Ascending aorta (tissue), 2 donors: ENCODE measurements at regions of chr7 and their contacts with region 1.

Region 1: GRCh38 chr7:66114793-66115649 is at the start of gene CRCP:
- DNase-seq: peak; percentile 25 to 88
- H3K4me3 ChIP-seq: peak within 1 kb of the TSS; percentile 88 to 90
- H3K27ac ChIP-seq: peak within 1 kb of the TSS; percentile 95 to 98
- H3K4me1 ChIP-seq: peaks cover 0 to 19% of the 10 kb centered on the region in 2 donors
- H3K27me3 ChIP-seq: no peaks in the 10 kb centered on the region
- CTCF ChIP-seq: peak in 2 of 3 experiments; percentile 7 to 30
- total RNA-seq, gene CRCP: 129 TPM

Region 2: DNA sequence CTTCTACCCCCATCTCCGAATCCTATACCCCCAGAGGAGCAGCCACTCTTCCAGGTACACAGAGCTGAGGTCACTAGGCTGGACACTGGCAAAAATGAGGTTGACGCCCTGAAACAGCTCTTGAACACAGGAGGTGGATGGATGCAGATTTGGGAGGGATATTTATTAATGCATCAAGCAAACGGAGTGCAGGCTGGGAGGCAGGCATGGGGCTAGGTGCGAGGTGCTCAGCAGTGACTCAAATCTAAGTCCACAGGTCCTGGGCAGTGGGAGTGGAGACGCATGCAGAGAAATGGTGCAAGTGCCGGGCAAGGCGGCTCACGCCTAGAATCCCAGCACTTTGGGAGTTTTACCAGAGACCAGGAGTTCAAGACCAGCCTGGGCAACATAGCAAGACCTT is 144.0 kb before region 1 on chr7:
- intact Hi-C with region 1: no loop called
- DNase-seq: peak in 1 of 2 donors; percentile 28
- H3K4me3 ChIP-seq: no peak overlapping the region
- H3K27ac ChIP-seq: no peak overlapping the region
- H3K4me1 ChIP-seq: no peaks in the 10 kb centered on the region
- H3K27me3 ChIP-seq: no peaks in the 10 kb centered on the region
- CTCF ChIP-seq: no peak

Region 3: GRCh38 chr7:65981965-65982792 is 132.8 kb before region 1 on chr7 and contains the start of gene GUSB:
- intact Hi-C with region 1: loop called (anchors 10 kb)
- DNase-seq: peak; percentile 56 to 94
- H3K4me3 ChIP-seq: peak within 1 kb of the TSS; percentile 79 to 91
- H3K27ac ChIP-seq: peak within 1 kb of the TSS; percentile 76 to 80
- H3K4me1 ChIP-seq: peaks cover 6 to 12% of the 10 kb centered on the region in 2 donors
- H3K27me3 ChIP-seq: no peaks in the 10 kb centered on the region
- CTCF ChIP-seq: no peak
- total RNA-seq, gene GUSB: 8.7 TPM

Region 4: DNA sequence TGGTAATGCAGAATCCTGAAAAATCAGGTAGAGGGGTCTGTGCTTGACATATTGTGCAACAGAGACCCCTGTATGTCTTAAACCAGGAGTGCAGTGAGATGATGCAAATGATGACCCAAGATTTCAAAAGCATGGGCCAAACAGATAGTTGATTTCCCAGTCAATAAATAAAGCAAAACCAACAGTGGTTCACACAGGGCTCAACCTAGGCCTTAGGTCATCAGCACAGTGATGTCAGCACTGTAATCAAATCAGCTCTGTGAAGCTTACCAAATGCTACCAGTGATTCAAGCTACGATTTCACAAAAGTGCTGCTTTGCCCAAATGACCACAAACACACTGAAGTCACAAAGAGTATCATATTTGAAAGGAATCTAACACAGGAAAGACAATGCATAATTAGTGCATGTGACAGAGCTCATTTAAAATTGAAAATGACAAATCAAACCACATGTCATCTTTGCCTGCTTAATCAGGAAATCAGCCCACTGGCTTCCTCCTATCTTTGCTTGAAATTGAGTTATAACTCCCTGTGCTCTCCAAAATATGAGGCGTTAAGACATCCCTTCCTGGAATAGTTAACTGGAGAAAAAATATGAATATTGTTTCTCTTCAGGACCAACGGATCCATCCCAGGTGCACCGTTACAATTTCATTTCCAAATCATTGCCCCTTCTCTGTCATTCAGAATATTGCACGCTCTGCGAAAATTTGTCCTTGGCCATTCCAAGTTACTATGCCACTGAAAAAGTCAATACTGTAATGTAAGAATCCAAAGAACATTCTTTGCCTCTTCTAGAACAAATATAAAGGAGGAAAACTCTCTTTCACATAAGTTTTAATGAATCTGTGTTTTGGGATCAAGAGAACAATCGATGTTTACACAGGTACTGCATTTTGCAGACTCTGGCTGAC is 81.3 kb before region 1 on chr7:
- intact Hi-C with region 1: loop called (anchors 5 kb)
- DNase-seq: no peak
- H3K4me3 ChIP-seq: no peak overlapping the region
- H3K27ac ChIP-seq: no peak overlapping the region
- H3K4me1 ChIP-seq: no peaks in the 10 kb centered on the region
- H3K27me3 ChIP-seq: no peaks in the 10 kb centered on the region
- CTCF ChIP-seq: no peak

Region 5: GRCh38 chr7:66075590-66076461 is 39.2 kb before region 1 on chr7 and contains the start of gene ASL:
- intact Hi-C with region 1: loop called (anchors 1 kb)
- DNase-seq: peak; percentile 73 to 96
- H3K4me3 ChIP-seq: peak within 1 kb of the TSS; percentile 92 to 94
- H3K27ac ChIP-seq: peak within 1 kb of the TSS; percentile 72 to 75
- H3K4me1 ChIP-seq: peaks cover 8 to 18% of the 10 kb centered on the region in 2 donors
- H3K27me3 ChIP-seq: no peaks in the 10 kb centered on the region
- CTCF ChIP-seq: no peak
- total RNA-seq, gene ASL: 46.2 TPM

Region 6: DNA sequence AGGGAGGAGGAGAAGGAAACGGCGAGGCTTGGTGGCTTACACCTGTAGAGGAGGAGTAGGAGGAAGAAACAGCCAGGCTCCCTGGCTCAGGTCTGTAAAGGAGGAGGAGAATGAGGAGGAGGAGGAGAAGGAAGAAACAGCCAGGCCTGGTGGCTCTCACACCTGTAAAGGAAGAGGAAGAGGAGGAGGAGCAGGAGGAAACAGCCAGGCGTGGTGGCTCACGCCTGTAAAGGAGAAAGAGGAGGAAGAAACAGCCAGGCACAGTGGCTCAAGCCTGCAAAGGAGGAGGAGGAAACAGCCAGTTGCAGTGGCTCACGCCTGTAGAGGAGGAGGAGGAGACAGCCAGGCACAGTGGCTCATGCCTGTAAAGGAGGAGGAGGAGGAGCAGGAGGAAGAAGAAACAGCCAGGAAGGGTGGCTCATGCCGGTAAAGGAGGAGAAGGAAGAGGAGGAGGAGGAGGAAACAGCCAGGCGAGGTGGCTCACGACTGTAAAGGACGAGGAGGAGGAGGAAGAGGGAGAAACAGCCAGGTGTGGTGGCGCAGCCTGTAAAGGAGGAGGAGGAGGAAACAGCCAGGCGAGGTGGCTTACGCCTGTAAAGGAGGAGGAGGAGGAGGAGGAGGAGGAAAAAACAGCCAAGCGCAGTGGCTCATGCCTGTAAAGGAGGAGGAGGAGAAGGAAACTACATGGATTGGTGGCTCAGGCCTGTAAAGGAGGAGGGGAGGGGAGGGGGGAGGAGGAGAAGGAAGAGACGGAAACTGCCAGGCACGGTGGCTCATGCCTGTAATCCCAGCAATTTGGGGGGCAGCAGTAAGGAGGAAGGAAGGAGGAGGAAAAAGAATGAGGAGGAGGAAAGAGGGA is 15.2 kb before region 1 on chr7:
- intact Hi-C with region 1: loop called (anchors 1 kb)
- DNase-seq: peak; percentile 25 to 88
- H3K4me3 ChIP-seq: peak overlapping the region; percentile 47 to 60
- H3K27ac ChIP-seq: peak overlapping the region; percentile 84 to 93
- H3K4me1 ChIP-seq: no peaks in the 10 kb centered on the region
- H3K27me3 ChIP-seq: no peaks in the 10 kb centered on the region
- CTCF ChIP-seq: no peak

Region 7: DNA sequence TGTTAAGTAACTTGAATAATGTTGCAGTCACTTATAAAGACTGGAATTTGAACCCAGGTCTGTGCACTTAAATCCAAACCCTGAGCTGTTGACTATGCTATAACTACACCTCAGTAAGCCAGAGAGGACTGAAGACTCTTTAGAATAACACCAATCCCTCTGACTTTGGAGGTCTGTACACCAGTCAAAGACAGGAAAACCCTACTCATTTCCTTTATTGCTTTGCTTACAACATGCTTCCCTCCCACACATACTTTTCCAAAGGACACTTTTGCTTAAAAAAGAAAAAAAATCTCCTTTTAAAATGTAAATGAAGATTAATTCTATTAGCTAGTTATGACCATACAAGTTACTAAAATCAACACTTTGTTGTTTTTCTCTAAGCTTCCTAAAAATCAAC is 328.9 kb after region 1 on chr7:
- intact Hi-C with region 1: no loop called
- DNase-seq: no peak
- H3K4me3 ChIP-seq: no peak overlapping the region
- H3K27ac ChIP-seq: no peak overlapping the region
- H3K4me1 ChIP-seq: no peaks in the 10 kb centered on the region
- H3K27me3 ChIP-seq: no peaks in the 10 kb centered on the region
- CTCF ChIP-seq: no peak

Region 8: DNA sequence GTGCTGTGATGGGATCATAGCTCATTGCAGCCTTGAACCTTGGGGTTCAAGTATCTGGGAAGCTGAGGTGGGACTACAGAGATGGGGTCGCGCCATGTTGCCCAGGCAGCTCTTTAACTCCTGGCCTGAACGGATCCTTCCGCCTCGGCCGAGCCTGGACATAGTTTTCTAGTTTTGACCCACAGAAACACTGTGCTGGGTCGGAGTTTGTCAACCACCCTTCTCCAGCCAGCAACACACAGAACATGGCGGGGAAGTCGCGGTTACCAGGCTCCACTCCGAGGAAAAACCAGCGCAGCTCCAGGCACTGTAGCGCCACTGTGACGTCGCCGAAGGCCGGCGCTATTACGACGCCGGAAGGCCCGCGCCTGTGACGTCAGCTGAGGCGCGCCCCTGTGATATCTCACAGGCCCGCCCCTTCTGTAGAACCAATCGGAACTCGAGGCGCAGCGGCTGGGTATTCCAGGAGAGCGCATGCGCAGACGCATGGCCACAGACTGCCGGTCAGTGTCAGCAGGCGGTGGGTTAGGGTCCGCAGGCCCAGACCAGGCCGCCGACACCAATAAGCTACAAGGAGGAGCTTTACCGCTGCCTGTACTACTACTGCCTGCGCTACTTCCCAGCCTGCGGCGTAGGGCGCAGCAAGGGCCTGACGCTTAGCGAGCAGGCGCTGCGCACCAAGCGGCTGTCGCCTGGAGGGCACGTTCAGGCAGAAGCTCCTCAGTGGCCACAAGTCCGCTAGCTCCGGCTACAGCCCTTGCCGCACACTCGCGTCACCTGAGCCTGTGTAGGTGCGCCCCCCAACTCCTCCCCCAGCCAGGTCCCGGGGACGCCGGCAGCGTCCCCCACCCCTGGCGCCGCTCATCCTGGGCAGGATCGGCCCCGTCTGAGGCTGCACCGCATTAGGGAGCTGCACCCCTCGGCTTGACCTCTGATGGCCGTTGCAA is 378.5 kb after region 1 on chr7:
- intact Hi-C with region 1: loop called (anchors 10 kb)
- DNase-seq: peak; percentile 89 to 99
- H3K4me3 ChIP-seq: peak overlapping the region; percentile 61 to 76
- H3K27ac ChIP-seq: peak overlapping the region; percentile 89 to 94
- H3K4me1 ChIP-seq: peaks cover 0 to 6% of the 10 kb centered on the region in 2 donors
- H3K27me3 ChIP-seq: no peaks in the 10 kb centered on the region
- CTCF ChIP-seq: peak; percentile 29 to 54 (median 38)